ENCODE measurements at regions of chr6 and their contacts with region 1.

Region 1: DNA sequence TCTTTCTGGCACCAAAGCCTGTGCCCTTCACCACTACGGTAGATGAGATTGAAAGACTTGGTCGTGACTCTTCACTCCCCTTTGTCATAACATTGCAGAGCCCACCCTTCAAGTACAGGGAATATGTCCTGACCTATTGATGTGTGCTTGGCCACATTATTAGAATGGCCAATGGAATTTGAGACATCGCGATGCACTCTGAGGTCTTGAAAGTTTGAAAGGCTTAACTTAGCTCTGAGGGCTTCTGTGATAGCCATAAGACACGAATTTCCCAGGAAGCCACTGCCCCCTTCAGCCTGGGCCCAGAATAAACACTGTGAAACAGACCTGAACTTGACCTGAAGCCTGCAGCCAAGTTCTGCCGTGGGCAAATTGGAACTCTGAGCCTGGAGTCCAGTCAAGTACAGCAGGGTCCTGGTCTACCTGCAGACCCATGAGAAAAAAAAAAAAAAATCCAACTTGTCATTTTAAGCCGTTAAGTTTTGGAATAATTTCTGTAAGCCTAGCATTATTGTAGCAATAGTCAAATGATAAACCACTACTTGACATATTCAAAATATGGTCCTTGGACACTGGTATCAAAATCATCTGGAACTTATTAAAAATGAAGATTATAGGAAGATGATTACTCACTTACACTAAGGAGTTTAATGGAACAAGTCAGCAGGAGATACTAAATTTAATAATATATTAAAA is 36.9 kb upstream of the TRAF3IP2 start:
- DNase-seq: peak; percentile 80
- H3K4me3 Mint-ChIP-seq: no peak overlapping the region
- H3K27ac Mint-ChIP-seq: no peak overlapping the region
- H3K4me1 Mint-ChIP-seq: peaks cover 4% of the 10 kb centered on the region
- H3K27me3 Mint-ChIP-seq: no peaks in the 10 kb centered on the region
- CTCF ChIP-seq: peak; percentile 65

Region 2: GRCh38 chr6:111361648-111362047 is 281.0 kb before region 1 on chr6:
- CTCF ChIA-PET with region 1: interaction called, 3 read pairs
- POLR2A ChIA-PET with region 1: no interaction called
- intact Hi-C with region 1: loop called (anchors 1 kb)
- DNase-seq: peak; percentile 56
- H3K4me3 Mint-ChIP-seq: no peak overlapping the region
- H3K27ac Mint-ChIP-seq: no peak overlapping the region
- H3K4me1 Mint-ChIP-seq: no peaks in the 10 kb centered on the region
- H3K27me3 Mint-ChIP-seq: no peaks in the 10 kb centered on the region
- CTCF ChIP-seq: peak; percentile 53

Region 3: DNA sequence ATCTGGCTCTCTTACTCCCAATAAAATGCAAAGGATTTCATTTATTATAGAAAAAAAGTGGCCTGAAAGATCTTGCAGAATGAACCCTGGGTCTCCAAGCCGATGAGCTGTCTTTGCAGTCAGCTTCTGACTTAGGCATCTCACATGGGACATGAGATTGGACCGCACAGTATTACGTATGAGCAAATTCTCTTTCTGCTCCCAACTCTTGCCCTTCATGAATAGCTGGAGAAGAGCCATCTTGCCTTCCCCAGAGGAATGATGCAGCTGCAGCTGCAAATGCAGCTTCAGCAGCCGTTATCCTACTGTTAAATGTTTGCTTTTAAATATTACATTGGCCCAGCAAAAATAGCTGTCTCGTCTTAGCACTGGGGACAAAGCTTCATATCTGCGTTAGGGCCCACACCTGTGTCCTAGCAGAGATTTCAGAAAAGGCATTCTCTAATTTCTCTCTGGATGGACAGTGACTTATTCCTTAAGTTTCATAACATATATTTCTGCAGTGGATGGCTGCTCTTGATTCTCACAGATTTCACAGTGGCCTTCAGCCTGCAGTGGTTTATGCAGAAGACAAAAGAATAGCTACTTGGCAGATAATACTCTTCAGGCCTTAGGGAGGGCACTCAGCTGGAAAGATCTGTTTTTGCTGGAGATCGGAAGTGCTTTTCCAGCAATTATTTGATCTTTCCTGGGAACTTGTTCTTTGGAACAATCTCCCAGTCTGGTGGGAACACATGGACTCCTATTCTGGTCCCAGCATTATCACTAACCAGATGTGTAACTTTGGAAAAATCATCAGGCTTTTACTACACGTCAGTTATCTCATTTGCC is 101.5 kb after region 1 on chr6:
- CTCF ChIA-PET with region 1: no interaction called
- POLR2A ChIA-PET with region 1: no interaction called
- intact Hi-C with region 1: no loop called
- DNase-seq: no peak
- H3K4me3 Mint-ChIP-seq: no peak overlapping the region
- H3K27ac Mint-ChIP-seq: no peak overlapping the region
- H3K4me1 Mint-ChIP-seq: peaks cover 8% of the 10 kb centered on the region
- H3K27me3 Mint-ChIP-seq: no peaks in the 10 kb centered on the region
- CTCF ChIP-seq: no peak

Region 4: DNA sequence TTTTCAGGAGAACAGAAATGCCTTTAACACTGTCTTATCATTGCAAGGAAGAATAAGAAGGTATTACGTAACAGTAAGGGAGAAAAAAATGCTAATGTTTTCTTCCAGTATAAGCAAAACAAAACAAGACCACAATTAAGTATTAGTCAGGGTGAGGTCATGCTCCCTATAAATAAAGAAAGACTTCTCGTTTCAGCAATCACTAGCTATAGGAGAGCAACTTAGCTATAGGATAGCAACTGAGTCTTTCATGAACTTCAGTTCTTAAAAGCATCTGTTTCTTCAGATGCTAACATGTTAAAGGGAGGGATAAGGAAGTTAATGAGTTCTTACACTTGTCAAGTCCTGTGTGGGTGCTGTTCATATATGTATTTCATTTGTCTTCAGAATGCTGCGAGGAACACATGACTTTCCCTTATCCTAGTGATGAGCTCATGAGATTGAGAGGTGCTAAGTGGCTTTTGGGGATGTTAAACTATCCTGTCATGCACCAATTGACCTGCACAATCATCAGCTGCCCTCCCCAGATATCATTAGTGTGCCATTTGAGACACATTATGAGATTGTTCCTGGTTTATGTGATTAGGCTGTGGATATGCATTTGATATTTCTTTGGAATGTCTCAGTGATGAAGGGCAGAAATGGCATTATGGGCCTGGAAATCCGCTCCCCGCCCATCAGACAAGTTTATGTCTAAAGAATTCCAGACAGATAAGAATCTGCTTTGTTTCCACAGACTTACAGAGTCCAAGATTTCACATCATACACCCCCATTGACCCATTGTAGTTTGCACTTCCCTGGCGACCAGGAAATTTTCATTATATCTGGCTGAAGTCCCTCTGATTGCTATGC is 574.3 kb after region 1 on chr6:
- CTCF ChIA-PET with region 1: no interaction called
- POLR2A ChIA-PET with region 1: no interaction called
- intact Hi-C with region 1: no loop called
- DNase-seq: peak; percentile 85
- H3K4me3 Mint-ChIP-seq: no peak overlapping the region
- H3K27ac Mint-ChIP-seq: no peak overlapping the region
- H3K4me1 Mint-ChIP-seq: peaks cover 22% of the 10 kb centered on the region
- H3K27me3 Mint-ChIP-seq: no peaks in the 10 kb centered on the region
- CTCF ChIP-seq: no peak

Measured in MCF 10A (cell line).